Body of pancreas (tissue), 4 donors: ENCODE measurements at regions of chr11 and their contacts with region 1.

Region 1: GRCh38 chr11:60838132-60838531 is 3.8 kb upstream of the CCDC86 start:
- DNase-seq: no peak
- ATAC-seq: no peak
- H3K4me3 ChIP-seq: no peak overlapping the region
- H3K27ac ChIP-seq: no peak overlapping the region
- H3K4me1 ChIP-seq: peaks cover 14% of the 10 kb centered on the region
- H3K27me3 ChIP-seq: no peaks in the 10 kb centered on the region
- CTCF ChIP-seq: peak in 1 of 7 experiments; percentile 14
- POLR2A ChIP-seq: no peak

Region 2: GRCh38 chr11:60900507-60901404 is 62.6 kb after region 1 on chr11:
- intact Hi-C with region 1: loop called (anchors 5 kb)
- DNase-seq: no peak
- ATAC-seq: no peak
- H3K4me3 ChIP-seq: no peak overlapping the region
- H3K27ac ChIP-seq: no peak overlapping the region
- H3K4me1 ChIP-seq: peaks cover 28% of the 10 kb centered on the region
- H3K27me3 ChIP-seq: no peaks in the 10 kb centered on the region
- CTCF ChIP-seq: no peak
- POLR2A ChIP-seq: no peak

Region 3: GRCh38 chr11:61011950-61012736 is 174.0 kb after region 1 on chr11:
- intact Hi-C with region 1: no loop called
- DNase-seq: no peak
- ATAC-seq: no peak
- H3K4me3 ChIP-seq: no peak overlapping the region
- H3K27ac ChIP-seq: no peak overlapping the region
- H3K4me1 ChIP-seq: peaks cover 23% of the 10 kb centered on the region
- H3K27me3 ChIP-seq: no peaks in the 10 kb centered on the region
- CTCF ChIP-seq: no peak
- POLR2A ChIP-seq: no peak